Caco-2 (cell line): ENCODE measurements at regions of chr11 and their contacts with region 1.

Region 1: DNA sequence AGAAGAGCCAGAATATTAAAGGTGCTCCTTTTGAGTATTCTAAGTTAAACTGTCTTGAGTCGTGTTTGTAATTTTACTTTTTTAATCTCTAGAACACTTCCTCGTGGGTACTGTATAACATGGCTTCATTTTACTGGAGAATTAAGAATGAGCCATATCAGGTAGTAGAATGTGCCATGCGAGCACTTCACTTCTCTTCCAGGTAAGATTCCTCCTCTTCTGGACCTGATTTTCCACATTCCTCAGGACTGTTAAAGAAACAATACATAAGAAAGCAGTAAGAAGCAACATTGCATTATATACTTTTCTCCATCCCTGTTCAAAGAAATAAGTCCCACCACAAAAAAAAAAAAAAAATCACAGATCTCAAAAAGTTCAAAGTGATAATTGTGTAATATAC is 37.9 kb downstream of the TTC17 start:
- DNase-seq: peak in 1 of 2 experiments; percentile 24
- H3K4me3 ChIP-seq: no peak overlapping the region
- H3K4me3 Mint-ChIP-seq: no peak overlapping the region
- H3K27ac Mint-ChIP-seq: no peak overlapping the region
- H3K4me1 ChIP-seq: peaks cover 5% of the 10 kb centered on the region; the same call in 1 of the 2 replicates
- H3K4me1 Mint-ChIP-seq: peaks cover 7% of the 10 kb centered on the region
- H3K27me3 ChIP-seq: no peaks in the 10 kb centered on the region
- H3K27me3 Mint-ChIP-seq: no peaks in the 10 kb centered on the region
- CTCF ChIP-seq: no peak

Region 2: GRCh38 chr11:43269254-43269918 is 127.2 kb before region 1 on chr11:
- CTCF ChIA-PET with region 1: no interaction called
- POLR2A ChIA-PET with region 1: no interaction called
- intact Hi-C with region 1: no loop called
- DNase-seq: no peak
- H3K4me3 ChIP-seq: no peak overlapping the region
- H3K4me3 Mint-ChIP-seq: no peak overlapping the region
- H3K27ac Mint-ChIP-seq: no peak overlapping the region
- H3K4me1 ChIP-seq: no peaks in the 10 kb centered on the region
- H3K4me1 Mint-ChIP-seq: no peaks in the 10 kb centered on the region
- H3K27me3 ChIP-seq: no peaks in the 10 kb centered on the region
- H3K27me3 Mint-ChIP-seq: peaks cover 16% of the 10 kb centered on the region
- CTCF ChIP-seq: no peak

Region 3: DNA sequence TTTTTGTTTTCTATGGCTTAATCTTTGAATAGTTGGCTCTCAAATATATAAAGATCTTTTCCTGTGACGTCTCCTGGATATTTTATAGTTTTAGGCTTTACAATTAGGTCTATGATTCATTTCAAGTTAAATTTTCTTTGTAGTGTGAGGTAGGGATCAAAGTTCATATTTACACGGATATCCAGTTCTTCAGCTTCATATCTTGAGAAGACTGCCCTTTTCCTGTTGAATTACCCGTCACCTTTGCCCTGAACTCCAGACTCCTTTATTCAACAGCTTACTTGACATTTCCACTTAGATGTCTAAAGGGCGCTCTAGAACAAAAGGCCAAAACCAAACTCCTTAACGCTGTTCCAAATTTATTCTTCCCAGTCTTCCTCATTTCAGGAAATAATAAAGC is 13.8 kb after region 1 on chr11:
- CTCF ChIA-PET with region 1: no interaction called
- POLR2A ChIA-PET with region 1: no interaction called
- intact Hi-C with region 1: loop called (anchors 1 kb)
- DNase-seq: peak; percentile 68 to 72
- H3K4me3 ChIP-seq: no peak overlapping the region
- H3K4me3 Mint-ChIP-seq: peak overlapping the region; percentile 63
- H3K27ac Mint-ChIP-seq: peak overlapping the region; percentile 58
- H3K4me1 ChIP-seq: peaks cover 30% of the 10 kb centered on the region
- H3K4me1 Mint-ChIP-seq: peaks cover 23% of the 10 kb centered on the region
- H3K27me3 ChIP-seq: no peaks in the 10 kb centered on the region
- H3K27me3 Mint-ChIP-seq: no peaks in the 10 kb centered on the region
- CTCF ChIP-seq: no peak

Region 4: DNA sequence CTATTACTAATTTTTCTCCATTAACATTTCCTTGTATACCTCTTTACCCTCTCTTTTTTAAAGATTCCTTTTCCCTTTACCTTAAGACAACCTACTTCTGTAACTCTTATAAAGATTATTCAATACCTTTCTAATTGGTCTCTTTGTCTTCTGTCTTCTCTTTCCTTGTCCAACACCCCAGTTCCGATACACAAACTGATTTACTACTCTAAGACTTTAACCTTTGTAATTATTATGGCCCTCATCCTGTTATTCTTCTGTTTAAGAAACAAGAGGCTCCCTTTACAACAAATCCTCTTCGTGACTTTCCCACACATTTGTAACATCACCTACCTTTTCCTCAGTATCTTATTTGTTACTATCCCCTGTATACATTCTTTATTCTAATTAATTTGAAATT is 43.9 kb after region 1 on chr11:
- CTCF ChIA-PET with region 1: no interaction called
- POLR2A ChIA-PET with region 1: no interaction called
- intact Hi-C with region 1: no loop called
- DNase-seq: no peak
- H3K4me3 ChIP-seq: no peak overlapping the region
- H3K4me3 Mint-ChIP-seq: no peak overlapping the region
- H3K27ac Mint-ChIP-seq: no peak overlapping the region
- H3K4me1 ChIP-seq: no peaks in the 10 kb centered on the region
- H3K4me1 Mint-ChIP-seq: no peaks in the 10 kb centered on the region
- H3K27me3 ChIP-seq: no peaks in the 10 kb centered on the region
- H3K27me3 Mint-ChIP-seq: no peaks in the 10 kb centered on the region
- CTCF ChIP-seq: no peak

Region 5: DNA sequence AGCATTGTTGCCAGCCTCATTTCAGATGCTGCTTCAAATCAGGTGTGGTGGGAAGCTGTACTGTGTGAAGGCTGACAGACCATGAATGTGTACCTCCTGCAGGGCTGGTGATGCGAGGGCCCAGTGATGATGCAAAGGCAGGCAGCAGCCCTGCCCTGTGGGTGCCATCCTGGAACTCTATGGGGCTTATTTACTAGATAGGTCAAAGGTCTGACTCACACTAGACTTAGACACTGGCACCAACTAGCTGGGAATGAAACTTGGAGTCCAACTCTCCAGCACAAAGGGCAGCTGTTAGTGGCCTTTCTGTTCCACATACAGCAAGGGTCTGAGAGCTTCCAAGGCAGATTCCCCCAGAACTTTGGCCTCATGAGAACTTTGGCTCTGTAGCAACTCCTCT is 100.5 kb after region 1 on chr11:
- CTCF ChIA-PET with region 1: no interaction called
- POLR2A ChIA-PET with region 1: no interaction called
- intact Hi-C with region 1: no loop called
- DNase-seq: no peak
- H3K4me3 ChIP-seq: no peak overlapping the region
- H3K4me3 Mint-ChIP-seq: no peak overlapping the region
- H3K27ac Mint-ChIP-seq: no peak overlapping the region
- H3K4me1 ChIP-seq: no peaks in the 10 kb centered on the region
- H3K4me1 Mint-ChIP-seq: no peaks in the 10 kb centered on the region
- H3K27me3 ChIP-seq: no peaks in the 10 kb centered on the region
- H3K27me3 Mint-ChIP-seq: peaks cover 11% of the 10 kb centered on the region
- CTCF ChIP-seq: no peak